ENCODE measurements at regions of chr3 and their contacts with region 1.

Region 1: GRCh38 chr3:148309390-148310035 is 388.2 kb upstream of the AGTR1 start:
- DNase-seq: peak; percentile 51
- ATAC-seq: peak; percentile 91
- H3K4me3 ChIP-seq: no peak overlapping the region
- H3K27ac ChIP-seq: no peak overlapping the region
- H3K4me1 ChIP-seq: no peaks in the 10 kb centered on the region
- H3K27me3 ChIP-seq: no peaks in the 10 kb centered on the region
- CTCF ChIP-seq: peak; percentile 79
- POLR2A ChIP-seq: no peak
- RAD21 ChIP-seq: peak; percentile 72

Region 2: GRCh38 chr3:147963711-147964110 is 345.8 kb before region 1 on chr3:
- CTCF ChIA-PET with region 1: no interaction called
- POLR2A ChIA-PET with region 1: no interaction called
- dilution Hi-C with region 1: no loop called
- in situ Hi-C with region 1: no loop called
- intact Hi-C with region 1: no loop called
- DNase-seq: no peak
- ATAC-seq: no peak
- H3K4me3 ChIP-seq: no peak overlapping the region
- H3K27ac ChIP-seq: no peak overlapping the region
- H3K4me1 ChIP-seq: no peaks in the 10 kb centered on the region
- H3K27me3 ChIP-seq: no peaks in the 10 kb centered on the region
- CTCF ChIP-seq: no peak
- POLR2A ChIP-seq: no peak
- RAD21 ChIP-seq: no peak

Region 3: GRCh38 chr3:148297013-148297412 is 12.5 kb before region 1 on chr3:
- CTCF ChIA-PET with region 1: no interaction called
- POLR2A ChIA-PET with region 1: no interaction called
- dilution Hi-C with region 1: no loop called
- in situ Hi-C with region 1: no loop called
- intact Hi-C with region 1: no loop called
- DNase-seq: no peak
- ATAC-seq: no peak
- H3K4me3 ChIP-seq: no peak overlapping the region
- H3K27ac ChIP-seq: no peak overlapping the region
- H3K4me1 ChIP-seq: no peaks in the 10 kb centered on the region
- H3K27me3 ChIP-seq: no peaks in the 10 kb centered on the region
- CTCF ChIP-seq: no peak
- POLR2A ChIP-seq: no peak
- RAD21 ChIP-seq: no peak

Region 4: GRCh38 chr3:148366743-148367410 is 57.4 kb after region 1 on chr3:
- CTCF ChIA-PET with region 1: no interaction called
- POLR2A ChIA-PET with region 1: no interaction called
- dilution Hi-C with region 1: no loop called
- in situ Hi-C with region 1: loop called (anchors 10 kb)
- intact Hi-C with region 1: loop called (anchors 1 kb)
- DNase-seq: peak; percentile 9
- ATAC-seq: peak; percentile 56
- H3K4me3 ChIP-seq: no peak overlapping the region
- H3K27ac ChIP-seq: no peak overlapping the region
- H3K4me1 ChIP-seq: no peaks in the 10 kb centered on the region
- H3K27me3 ChIP-seq: no peaks in the 10 kb centered on the region
- CTCF ChIP-seq: peak; percentile 44
- POLR2A ChIP-seq: no peak
- RAD21 ChIP-seq: peak; percentile 48

Region 5: GRCh38 chr3:148631124-148631903 is 321.8 kb after region 1 on chr3:
- CTCF ChIA-PET with region 1: no interaction called
- POLR2A ChIA-PET with region 1: no interaction called
- dilution Hi-C with region 1: no loop called
- in situ Hi-C with region 1: no loop called
- intact Hi-C with region 1: loop called (anchors 5 kb)
- DNase-seq: no peak
- ATAC-seq: no peak
- H3K4me3 ChIP-seq: no peak overlapping the region
- H3K27ac ChIP-seq: no peak overlapping the region
- H3K4me1 ChIP-seq: no peaks in the 10 kb centered on the region
- H3K27me3 ChIP-seq: no peaks in the 10 kb centered on the region
- CTCF ChIP-seq: 0 out of 2 replicates have a peak, but pooled peaks have one; percentile 27
- POLR2A ChIP-seq: no peak
- RAD21 ChIP-seq: peak; percentile 34; the same call in 1 of the 2 replicates

Region 6: DNA sequence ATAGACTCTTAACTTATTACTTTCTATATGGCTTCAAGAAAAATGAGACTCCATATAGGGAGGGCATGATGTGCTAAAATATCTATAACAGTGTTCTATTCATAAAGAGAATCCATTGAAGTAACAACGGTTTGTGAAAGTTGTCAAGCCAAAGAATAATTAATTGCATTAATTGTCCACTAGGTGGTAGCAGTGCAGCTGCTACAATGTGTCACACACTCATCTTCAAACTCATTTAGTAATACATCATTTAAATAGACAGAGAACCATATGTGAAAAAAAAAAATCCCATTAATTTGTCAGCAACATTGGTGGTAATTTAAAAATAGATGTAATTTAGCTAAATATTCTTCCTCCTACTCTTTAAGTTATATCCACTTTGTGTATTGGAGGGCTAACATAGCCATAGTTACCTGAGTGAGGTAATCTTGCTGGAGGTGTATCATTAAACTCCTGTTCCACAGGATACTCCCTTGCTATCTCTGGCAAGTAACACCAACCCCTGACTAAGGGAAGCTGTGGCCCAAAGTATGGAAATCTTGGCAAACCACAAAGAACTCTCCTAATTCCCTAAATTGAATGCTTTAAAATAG is 551.9 kb after region 1 on chr3:
- CTCF ChIA-PET with region 1: no interaction called
- POLR2A ChIA-PET with region 1: no interaction called
- dilution Hi-C with region 1: no loop called
- in situ Hi-C with region 1: no loop called
- intact Hi-C with region 1: loop called (anchors 10 kb)
- DNase-seq: peak; percentile 54
- ATAC-seq: peak; percentile 77
- H3K4me3 ChIP-seq: no peak overlapping the region
- H3K27ac ChIP-seq: no peak overlapping the region
- H3K4me1 ChIP-seq: no peaks in the 10 kb centered on the region
- H3K27me3 ChIP-seq: peaks cover 5% of the 10 kb centered on the region
- CTCF ChIP-seq: peak; percentile 69
- POLR2A ChIP-seq: no peak
- RAD21 ChIP-seq: peak; percentile 84